ENCODE measurements at regions of chrX and their contacts with region 1.

Region 1: DNA sequence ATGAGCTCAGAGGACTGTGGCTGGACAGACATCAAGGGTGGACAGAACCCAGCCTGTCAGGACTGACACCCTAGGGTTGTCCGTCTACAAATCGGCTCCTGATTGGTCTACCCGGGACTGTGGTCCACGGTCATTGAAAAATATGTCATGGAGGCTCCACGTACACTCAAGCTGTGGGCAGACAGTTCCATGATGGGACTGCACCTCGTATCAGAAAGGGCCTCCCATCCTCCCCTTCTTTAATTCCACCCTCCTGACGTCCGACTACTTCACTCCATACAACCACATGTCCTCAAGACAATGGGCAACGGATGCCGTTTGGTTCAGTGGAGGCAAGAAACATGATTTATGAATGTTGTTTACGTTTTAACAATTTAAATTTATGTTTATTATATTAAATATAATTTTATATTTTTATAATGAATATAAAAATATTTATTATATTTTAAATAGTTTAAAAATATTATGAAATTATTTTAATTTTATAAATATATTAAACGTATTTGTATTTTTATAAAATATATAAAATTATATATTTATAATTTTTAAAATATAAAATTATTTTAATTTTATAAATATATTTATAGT is 58.0 kb upstream of the SHOX start:
- DNase-seq: no peak
- ATAC-seq: no peak
- H3K4me3 ChIP-seq: no peak overlapping the region
- H3K4me3 Mint-ChIP-seq: no peak overlapping the region
- H3K27ac ChIP-seq: no peak overlapping the region
- H3K27ac Mint-ChIP-seq: peak overlapping the region in 1 of 9 donors; percentile 59
- H3K4me1 ChIP-seq: no peaks in the 10 kb centered on the region
- H3K4me1 Mint-ChIP-seq: no peaks in the 10 kb centered on the region
- H3K27me3 ChIP-seq: no peaks in the 10 kb centered on the region
- H3K27me3 Mint-ChIP-seq: peaks cover 0 to 13% (median 5%) of the 10 kb centered on the region in 5 donors

Region 2: GRCh38 chrX:318739-319578 is 253.7 kb before region 1 on chrX and contains the start of gene GTPBP6:
- CTCF ChIA-PET with region 1: no interaction called
- POLR2A ChIA-PET with region 1: no interaction called
- intact Hi-C with region 1: no loop called
- DNase-seq: peak; percentile 93 to 100 (median 99)
- ATAC-seq: peak; percentile 80
- H3K4me3 ChIP-seq: peak within 1 kb of the TSS; percentile 70
- H3K4me3 Mint-ChIP-seq: peak within 1 kb of the TSS in 9 of 10 donors; percentile 85 to 98 (median 92)
- H3K27ac ChIP-seq: peak within 1 kb of the TSS; percentile 95
- H3K27ac Mint-ChIP-seq: peak within 1 kb of the TSS; percentile 93 to 100 (median 98)
- H3K4me1 ChIP-seq: peaks cover 15 to 16% of the 10 kb centered on the region in 2 donors
- H3K4me1 Mint-ChIP-seq: peaks cover 8 to 34% (median 25%) of the 10 kb centered on the region in 7 donors
- H3K27me3 ChIP-seq: no peaks in the 10 kb centered on the region
- H3K27me3 Mint-ChIP-seq: peaks cover 0 to 3% (median 0%) of the 10 kb centered on the region in 5 donors
- total RNA-seq, gene GTPBP6: 52.1 to 95.2 (median 75.1) TPM

Region 3: DNA sequence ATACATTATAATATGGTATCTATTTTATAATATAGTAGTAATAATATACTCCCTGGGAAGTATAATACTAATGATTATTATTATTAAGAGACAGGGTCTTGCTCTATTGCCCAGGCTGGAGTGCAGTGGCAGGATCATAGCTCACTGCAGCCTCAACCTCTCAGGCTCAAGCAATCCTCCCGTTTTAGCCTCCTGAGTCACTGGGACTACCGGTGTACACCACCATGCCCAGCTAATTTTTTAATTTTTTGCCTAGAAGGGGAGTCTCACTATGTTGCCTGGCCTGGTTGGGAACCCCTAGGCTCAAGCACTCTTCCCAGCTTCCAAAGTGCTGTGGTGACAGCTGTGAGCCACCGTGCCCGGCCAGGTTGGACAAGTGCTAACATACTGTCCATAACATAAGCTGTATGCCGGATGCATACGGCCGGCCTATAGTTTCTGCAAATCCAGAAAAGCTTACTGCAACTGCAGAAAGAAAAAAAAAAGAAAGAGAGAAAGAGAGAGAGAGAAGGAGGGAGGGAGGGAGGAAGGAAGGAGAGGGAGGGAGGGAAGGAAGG is 91.7 kb before region 1 on chrX:
- CTCF ChIA-PET with region 1: no interaction called
- POLR2A ChIA-PET with region 1: no interaction called
- intact Hi-C with region 1: loop called in 1 of 2 experiments (anchors 5 kb)
- DNase-seq: no peak
- ATAC-seq: no peak
- H3K4me3 ChIP-seq: no peak overlapping the region
- H3K4me3 Mint-ChIP-seq: no peak overlapping the region
- H3K27ac ChIP-seq: no peak overlapping the region
- H3K27ac Mint-ChIP-seq: no peak overlapping the region
- H3K4me1 ChIP-seq: no peaks in the 10 kb centered on the region
- H3K4me1 Mint-ChIP-seq: peaks cover 0 to 4% (median 0%) of the 10 kb centered on the region in 7 donors
- H3K27me3 ChIP-seq: no peaks in the 10 kb centered on the region
- H3K27me3 Mint-ChIP-seq: peaks cover 0 to 10% (median 0%) of the 10 kb centered on the region in 5 donors

Region 4: GRCh38 chrX:933611-934010 is 361.0 kb after region 1 on chrX:
- CTCF ChIA-PET with region 1: no interaction called
- POLR2A ChIA-PET with region 1: no interaction called
- intact Hi-C with region 1: loop called in 1 of 2 experiments (anchors 5 kb)
- DNase-seq: no peak
- ATAC-seq: no peak
- H3K4me3 ChIP-seq: no peak overlapping the region
- H3K4me3 Mint-ChIP-seq: no peak overlapping the region
- H3K27ac ChIP-seq: no peak overlapping the region
- H3K27ac Mint-ChIP-seq: no peak overlapping the region
- H3K4me1 ChIP-seq: no peaks in the 10 kb centered on the region
- H3K4me1 Mint-ChIP-seq: no peaks in the 10 kb centered on the region
- H3K27me3 ChIP-seq: no peaks in the 10 kb centered on the region
- H3K27me3 Mint-ChIP-seq: no peaks in the 10 kb centered on the region

Region 5: DNA sequence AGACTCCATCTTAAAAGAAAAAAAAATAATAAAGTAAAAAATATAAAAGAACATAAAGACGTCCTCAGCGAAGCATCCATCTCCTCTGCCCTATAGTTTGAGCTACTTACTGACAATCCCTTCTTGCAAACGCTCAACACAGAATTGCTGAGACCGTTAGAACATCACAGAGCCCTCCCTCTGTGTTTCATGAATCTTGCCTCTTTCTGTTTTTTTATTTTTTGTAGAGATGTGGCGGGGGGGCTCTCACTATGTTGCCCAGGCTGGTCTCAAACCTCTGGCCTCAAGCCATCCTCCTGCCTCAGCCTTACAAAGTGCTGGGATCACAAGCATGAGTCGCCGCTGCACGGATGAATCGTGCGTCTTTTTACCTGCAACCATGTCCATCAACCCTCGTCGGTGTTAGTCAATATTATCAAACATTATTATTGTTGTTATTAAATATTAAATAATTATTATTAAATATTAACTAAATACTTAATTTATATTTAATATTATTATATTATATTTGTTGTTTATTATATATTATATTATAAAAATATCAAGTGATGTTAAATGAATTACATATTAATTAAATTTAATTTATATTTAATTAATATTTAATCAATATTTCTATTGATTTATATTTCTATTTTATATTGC is 439.1 kb after region 1 on chrX:
- CTCF ChIA-PET with region 1: no interaction called
- POLR2A ChIA-PET with region 1: no interaction called
- intact Hi-C with region 1: loop called in 1 of 2 experiments (anchors 5 kb)
- DNase-seq: peak in 3 of 9 donors; percentile 18 to 54 (median 41)
- ATAC-seq: no peak
- H3K4me3 ChIP-seq: no peak overlapping the region
- H3K4me3 Mint-ChIP-seq: no peak overlapping the region
- H3K27ac ChIP-seq: no peak overlapping the region
- H3K27ac Mint-ChIP-seq: peak overlapping the region in 2 of 9 donors; percentile 61 to 81
- H3K4me1 ChIP-seq: no peaks in the 10 kb centered on the region
- H3K4me1 Mint-ChIP-seq: peaks cover 0 to 4% (median 0%) of the 10 kb centered on the region in 7 donors
- H3K27me3 ChIP-seq: no peaks in the 10 kb centered on the region
- H3K27me3 Mint-ChIP-seq: no peaks in the 10 kb centered on the region

Region 6: DNA sequence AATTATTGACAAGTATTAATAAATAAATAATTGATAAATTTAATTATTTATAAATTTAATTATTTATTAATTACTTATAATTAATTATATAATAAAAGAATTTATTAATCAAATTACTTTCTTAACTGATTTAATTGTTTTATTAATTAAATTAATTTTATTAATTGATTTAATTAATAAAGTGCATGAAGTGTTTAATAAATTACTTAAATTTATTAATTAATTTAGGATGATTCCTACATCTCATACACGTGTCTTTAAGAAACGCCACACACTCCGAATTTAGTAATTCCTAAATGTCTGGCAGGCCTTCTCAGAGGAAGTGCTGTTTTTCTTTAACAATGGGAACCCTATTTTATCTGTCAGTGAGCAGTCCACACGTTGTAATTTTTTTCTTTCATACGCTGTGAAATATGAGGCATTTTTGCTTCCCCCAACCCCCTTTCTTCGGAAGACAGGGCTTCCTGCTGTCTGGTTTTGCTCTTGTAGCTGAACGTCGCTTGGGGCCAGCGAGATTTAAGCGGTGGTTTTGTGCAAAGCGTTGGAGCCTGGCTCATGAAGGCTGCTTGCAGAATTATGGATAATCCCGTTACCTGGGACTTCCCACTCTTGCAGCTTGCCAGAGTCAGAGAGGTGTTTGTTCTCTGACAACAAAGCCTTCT is 593.0 kb after region 1 on chrX:
- CTCF ChIA-PET with region 1: no interaction called
- POLR2A ChIA-PET with region 1: no interaction called
- intact Hi-C with region 1: loop called in 1 of 2 experiments (anchors 5 kb)
- DNase-seq: peak in 5 of 9 donors; percentile 30 to 66 (median 46)
- ATAC-seq: peak; percentile 44
- H3K4me3 ChIP-seq: no peak overlapping the region
- H3K4me3 Mint-ChIP-seq: peak overlapping the region; percentile 1 to 75 (median 60)
- H3K27ac ChIP-seq: no peak overlapping the region
- H3K27ac Mint-ChIP-seq: peak overlapping the region in 4 of 9 donors; percentile 79 to 90 (median 82)
- H3K4me1 ChIP-seq: peaks cover 0 to 14% of the 10 kb centered on the region in 2 donors
- H3K4me1 Mint-ChIP-seq: peaks cover 12 to 32% (median 24%) of the 10 kb centered on the region in 7 donors
- H3K27me3 ChIP-seq: no peaks in the 10 kb centered on the region
- H3K27me3 Mint-ChIP-seq: peaks cover 0 to 27% (median 11%) of the 10 kb centered on the region in 5 donors

Measured in naive thymus-derived CD4-positive, alpha-beta T cell (primary cell).